GM23248 (cell line): ENCODE measurements at regions of chr20 and their contacts with region 1.

Region 1: DNA sequence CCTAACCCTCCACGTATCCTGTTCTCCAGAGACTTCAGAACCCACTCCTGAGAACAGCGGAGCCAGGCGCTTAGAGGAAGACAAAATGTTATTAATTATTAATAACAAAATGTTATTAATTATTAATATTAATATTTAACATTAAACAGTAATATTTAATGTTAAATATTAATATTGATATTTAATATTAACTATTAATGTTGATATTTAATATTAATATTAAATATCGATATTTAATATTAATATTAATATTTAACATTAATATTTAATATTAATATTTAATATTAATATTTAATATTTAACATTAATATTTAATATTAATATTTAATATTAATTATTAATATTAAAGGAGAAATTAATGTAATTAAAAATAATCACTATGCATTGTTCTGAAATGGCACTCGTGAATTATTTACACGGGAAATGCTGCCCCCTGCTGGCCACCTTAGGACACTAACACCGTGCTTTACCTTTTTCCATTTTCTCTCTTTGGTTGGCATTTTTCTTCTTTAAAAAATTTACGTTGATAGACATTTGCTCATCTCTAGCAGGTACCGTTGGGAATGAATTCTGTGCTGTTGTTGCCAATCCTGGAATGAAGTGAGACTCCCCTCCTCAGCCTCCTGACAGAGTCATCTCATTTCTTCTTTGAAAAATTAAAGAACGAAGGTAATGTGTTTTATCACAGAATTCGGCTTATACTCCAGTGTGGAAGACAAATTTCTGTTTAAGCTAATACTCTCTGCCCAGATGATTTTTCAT is 7.5 kb upstream of the GGTLC1 start:
- DNase-seq: peak; percentile 65
- H3K4me3 ChIP-seq: no peak overlapping the region
- H3K27ac ChIP-seq: no peak overlapping the region
- H3K4me1 ChIP-seq: no peaks in the 10 kb centered on the region
- H3K27me3 ChIP-seq: peaks cover 4% of the 10 kb centered on the region; the same call in 1 of the 2 replicates

Region 2: GRCh38 chr20:23680146-23680545 is 315.9 kb before region 1 on chr20:
- in situ Hi-C with region 1: loop called (anchors 25 kb)
- DNase-seq: no peak
- H3K4me3 ChIP-seq: no peak overlapping the region
- H3K27ac ChIP-seq: no peak overlapping the region
- H3K4me1 ChIP-seq: no peaks in the 10 kb centered on the region
- H3K27me3 ChIP-seq: peaks cover 13% of the 10 kb centered on the region; the same call in 1 of the 2 replicates